Endothelial cell of umbilical vein (primary cell): ENCODE measurements at regions of chr6 and their contacts with region 1.

Region 1: DNA sequence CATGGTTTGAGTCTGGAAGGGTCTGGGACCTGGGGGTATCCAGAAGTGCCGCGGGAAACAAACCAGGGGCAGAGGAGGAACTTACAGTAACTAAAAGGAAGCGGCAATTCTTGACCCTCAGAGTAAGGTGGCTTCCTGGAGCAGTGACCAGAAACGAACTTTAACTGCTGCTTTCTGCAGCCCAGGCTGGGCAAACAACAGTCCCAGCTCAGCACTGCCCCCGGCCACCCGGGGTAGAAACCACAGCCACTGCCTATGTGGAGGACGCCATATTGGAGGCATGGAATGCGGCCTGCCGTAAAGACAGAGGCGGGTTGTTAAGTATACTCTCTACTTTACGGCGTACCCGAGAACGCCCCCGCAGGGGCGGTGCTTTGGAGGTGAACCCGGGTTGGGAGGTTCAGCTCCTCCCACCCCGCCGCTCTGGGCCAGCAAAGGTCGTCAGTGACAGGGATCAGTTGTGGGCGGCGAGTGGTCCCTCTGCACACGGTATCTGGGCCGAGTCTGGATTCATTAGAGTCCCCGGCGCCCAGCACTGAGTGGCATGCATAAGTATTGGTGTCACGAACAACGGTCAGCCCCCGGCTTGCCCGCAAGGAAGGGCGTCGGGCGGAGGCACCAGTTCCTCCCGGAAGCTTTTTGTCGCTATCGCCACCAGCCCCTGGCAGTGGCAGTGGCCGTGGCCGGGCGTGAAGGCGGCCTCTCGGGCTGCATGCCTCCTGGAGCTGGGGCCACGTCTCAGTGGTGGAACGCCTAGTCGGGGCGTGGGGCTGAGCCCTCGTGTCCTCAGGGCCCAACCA is at the start of gene PDSS2:
- DNase-seq: peak; percentile 96
- H3K4me3 ChIP-seq: peak within 1 kb of the TSS; percentile 75 to 90 (median 81)
- H3K27ac ChIP-seq: peak within 1 kb of the TSS; percentile 22
- H3K4me1 ChIP-seq: peaks cover 4% of the 10 kb centered on the region
- H3K27me3 ChIP-seq: no peaks in the 10 kb centered on the region
- CTCF ChIP-seq: peak; percentile 65 to 66
- POLR2A ChIP-seq: peak; percentile 88
- total RNA-seq, gene PDSS2: 9.3 and 10.6 TPM in 2 replicates

Region 2: GRCh38 chr6:107083047-107083768 is 376.3 kb before region 1 on chr6:
- CTCF ChIA-PET with region 1: no interaction called
- POLR2A ChIA-PET with region 1: no interaction called
- dilution Hi-C with region 1: no loop called
- intact Hi-C with region 1: no loop called
- DNase-seq: no peak
- H3K4me3 ChIP-seq: no peak overlapping the region
- H3K27ac ChIP-seq: no peak overlapping the region
- H3K4me1 ChIP-seq: no peaks in the 10 kb centered on the region
- H3K27me3 ChIP-seq: no peaks in the 10 kb centered on the region
- CTCF ChIP-seq: no peak
- POLR2A ChIP-seq: no peak

Region 3: DNA sequence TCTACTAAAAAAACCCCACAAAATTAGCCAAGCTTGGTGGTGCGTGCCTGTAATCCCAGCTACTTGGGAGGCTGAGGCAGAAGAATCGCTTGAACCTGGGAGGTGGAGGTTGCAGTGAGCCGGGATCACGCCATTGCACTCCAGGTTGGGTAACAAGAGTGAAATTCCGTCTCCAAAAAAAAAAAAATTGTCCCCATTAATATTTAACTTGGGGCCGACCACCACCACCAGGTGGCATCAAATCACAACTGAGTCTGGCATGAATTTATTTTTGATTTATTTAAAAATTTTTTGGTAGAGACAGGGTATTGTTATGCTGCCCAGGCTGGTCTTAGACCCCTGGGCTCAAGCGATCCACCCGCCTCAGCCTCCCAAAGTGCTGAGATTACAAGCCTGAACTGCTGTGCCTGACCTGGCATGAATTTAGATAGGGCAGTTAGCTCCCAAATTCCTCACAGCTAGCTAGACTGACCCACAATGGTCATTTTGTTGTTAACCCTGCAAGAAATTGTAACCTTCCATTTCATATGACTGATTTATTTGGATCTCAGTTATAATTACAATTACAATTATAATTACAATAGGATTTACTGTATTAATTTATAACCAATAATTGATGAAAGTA is 327.0 kb before region 1 on chr6:
- CTCF ChIA-PET with region 1: interaction called, 5 read pairs
- POLR2A ChIA-PET with region 1: no interaction called
- dilution Hi-C with region 1: no loop called
- intact Hi-C with region 1: loop called (anchors 1 kb)
- DNase-seq: peak; percentile 32
- H3K4me3 ChIP-seq: no peak overlapping the region
- H3K27ac ChIP-seq: no peak overlapping the region
- H3K4me1 ChIP-seq: peaks cover 6% of the 10 kb centered on the region
- H3K27me3 ChIP-seq: no peaks in the 10 kb centered on the region
- CTCF ChIP-seq: peak; percentile 38 to 46
- POLR2A ChIP-seq: no peak

Region 4: GRCh38 chr6:107237992-107238660 is 221.4 kb before region 1 on chr6:
- CTCF ChIA-PET with region 1: no interaction called
- POLR2A ChIA-PET with region 1: no interaction called
- dilution Hi-C with region 1: no loop called
- intact Hi-C with region 1: loop called (anchors 1 kb)
- DNase-seq: peak; percentile 16
- H3K4me3 ChIP-seq: no peak overlapping the region
- H3K27ac ChIP-seq: no peak overlapping the region
- H3K4me1 ChIP-seq: peaks cover 6% of the 10 kb centered on the region
- H3K27me3 ChIP-seq: no peaks in the 10 kb centered on the region
- CTCF ChIP-seq: no peak
- POLR2A ChIP-seq: no peak

Region 5: GRCh38 chr6:107489636-107490565 is 30.4 kb after region 1 on chr6 and contains the start of gene SOBP:
- CTCF ChIA-PET with region 1: interaction called, 9 read pairs
- POLR2A ChIA-PET with region 1: interaction called, 3 read pairs
- dilution Hi-C with region 1: no loop called
- intact Hi-C with region 1: loop called (anchors 1 kb)
- DNase-seq: peak; percentile 54
- H3K4me3 ChIP-seq: peak within 1 kb of the TSS; percentile 61 to 99 (median 88)
- H3K27ac ChIP-seq: peak within 1 kb of the TSS; percentile 59
- H3K4me1 ChIP-seq: peaks cover 50% of the 10 kb centered on the region
- H3K27me3 ChIP-seq: peaks cover 13 to 22% of the 10 kb centered on the region in 2 experiments
- CTCF ChIP-seq: peak; percentile 2 to 13
- POLR2A ChIP-seq: no peak
- total RNA-seq, gene SOBP: 6.1 and 6.6 TPM in 2 replicates

Region 6: DNA sequence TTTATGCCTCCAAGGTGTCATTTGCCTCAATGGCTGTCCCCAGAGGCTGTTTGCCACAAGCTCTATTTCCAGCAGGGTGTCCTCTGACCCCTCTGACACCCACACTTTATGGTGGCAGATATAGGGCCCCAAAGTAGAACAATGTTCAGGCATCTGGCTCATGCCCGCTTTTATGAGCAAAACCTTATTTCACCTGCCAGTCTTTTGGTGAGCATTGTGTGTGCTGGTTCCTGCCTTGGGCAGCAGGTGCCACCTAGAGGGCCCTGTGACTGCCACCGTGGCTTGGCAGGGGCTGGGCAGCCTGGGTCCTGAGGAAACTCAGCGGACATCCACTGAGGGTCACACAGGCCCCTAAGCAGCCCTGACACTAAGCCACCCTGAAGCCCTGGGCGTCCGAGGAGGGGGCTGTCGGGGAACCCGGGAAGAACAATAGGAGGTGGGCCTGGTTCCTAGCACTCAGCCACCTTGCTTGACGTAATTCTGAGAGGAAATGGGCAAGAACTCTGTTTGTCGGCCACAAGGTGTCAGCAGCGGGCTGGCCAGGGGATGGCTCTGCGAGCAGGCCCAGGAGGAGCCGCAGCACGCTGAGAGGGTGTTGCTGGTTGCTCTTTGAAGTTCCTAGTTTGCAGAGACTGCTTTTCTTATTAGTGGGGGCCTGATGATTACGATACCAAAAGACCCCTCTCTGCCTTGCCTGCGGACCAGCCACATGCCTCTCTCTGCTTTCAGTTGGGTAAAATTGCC is 215.7 kb after region 1 on chr6:
- CTCF ChIA-PET with region 1: interaction called, 4 read pairs
- POLR2A ChIA-PET with region 1: no interaction called
- dilution Hi-C with region 1: no loop called
- intact Hi-C with region 1: loop called (anchors 1 kb)
- DNase-seq: peak; percentile 81
- H3K4me3 ChIP-seq: no peak overlapping the region
- H3K27ac ChIP-seq: no peak overlapping the region
- H3K4me1 ChIP-seq: peaks cover 13% of the 10 kb centered on the region
- H3K27me3 ChIP-seq: peaks cover 8 to 14% of the 10 kb centered on the region in 2 experiments
- CTCF ChIP-seq: peak; percentile 83 to 87
- POLR2A ChIP-seq: no peak